ENCODE measurements at regions of chr1 and their contacts with region 1.

Region 1: GRCh38 chr1:184222652-184223052 is 164.2 kb upstream of the C1orf21 start:
- DNase-seq: no peak
- ATAC-seq: peak; percentile 82 to 85
- H3K4me3 ChIP-seq: no peak overlapping the region
- H3K27ac ChIP-seq: no peak overlapping the region
- H3K4me1 ChIP-seq: no peaks in the 10 kb centered on the region
- H3K27me3 ChIP-seq: no peaks in the 10 kb centered on the region
- CTCF ChIP-seq: peak; percentile 96

Region 2: GRCh38 chr1:184075055-184076029 is 147.3 kb before region 1 on chr1:
- intact Hi-C with region 1: loop called (anchors 5 kb)
- DNase-seq: no peak
- ATAC-seq: peak; percentile 79 to 83
- H3K4me3 ChIP-seq: no peak overlapping the region
- H3K27ac ChIP-seq: no peak overlapping the region
- H3K4me1 ChIP-seq: peaks cover 12% of the 10 kb centered on the region
- H3K27me3 ChIP-seq: no peaks in the 10 kb centered on the region
- CTCF ChIP-seq: peak; percentile 66

Region 3: DNA sequence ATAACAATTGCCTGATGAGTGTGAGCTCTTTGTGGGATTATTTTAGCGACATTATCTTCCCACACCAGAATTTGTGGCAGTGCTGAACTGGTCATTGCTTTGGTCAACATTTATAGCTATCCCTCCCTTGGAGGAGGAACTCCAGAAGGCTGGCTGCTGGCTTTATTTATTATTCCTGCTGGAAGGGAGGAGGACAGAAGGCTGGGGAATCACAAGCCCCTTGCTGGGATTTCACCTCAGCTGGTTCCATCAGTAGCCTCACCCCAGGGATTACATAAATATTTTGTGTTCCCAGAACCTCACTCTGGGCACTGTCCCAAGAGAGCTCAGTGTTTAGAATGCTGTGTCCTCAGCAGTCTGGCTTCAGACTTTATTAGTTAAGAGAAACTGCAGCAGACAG is 61.3 kb after region 1 on chr1:
- intact Hi-C with region 1: no loop called
- DNase-seq: no peak
- ATAC-seq: peak; percentile 37 to 58
- H3K4me3 ChIP-seq: no peak overlapping the region
- H3K27ac ChIP-seq: peak overlapping the region; percentile 2
- H3K4me1 ChIP-seq: peaks cover 12% of the 10 kb centered on the region
- H3K27me3 ChIP-seq: no peaks in the 10 kb centered on the region
- CTCF ChIP-seq: no peak

Measured in lower lobe of right lung (tissue), 2 donors.